Psoas muscle (tissue), 8 donors: ENCODE measurements at regions of chr17 and their contacts with region 1.

Region 1: GRCh38 chr17:27601069-27601975 is 29.7 kb upstream of the LGALS9 start:
- DNase-seq: peak; percentile 66 to 81
- ATAC-seq: peak; percentile 59 to 76 (median 60)
- H3K4me3 ChIP-seq: no peak overlapping the region
- H3K27ac ChIP-seq: peak overlapping the region; percentile 7
- H3K4me1 ChIP-seq: no peaks in the 10 kb centered on the region
- H3K27me3 ChIP-seq: no peaks in the 10 kb centered on the region
- CTCF ChIP-seq: peak; percentile 96

Region 2: DNA sequence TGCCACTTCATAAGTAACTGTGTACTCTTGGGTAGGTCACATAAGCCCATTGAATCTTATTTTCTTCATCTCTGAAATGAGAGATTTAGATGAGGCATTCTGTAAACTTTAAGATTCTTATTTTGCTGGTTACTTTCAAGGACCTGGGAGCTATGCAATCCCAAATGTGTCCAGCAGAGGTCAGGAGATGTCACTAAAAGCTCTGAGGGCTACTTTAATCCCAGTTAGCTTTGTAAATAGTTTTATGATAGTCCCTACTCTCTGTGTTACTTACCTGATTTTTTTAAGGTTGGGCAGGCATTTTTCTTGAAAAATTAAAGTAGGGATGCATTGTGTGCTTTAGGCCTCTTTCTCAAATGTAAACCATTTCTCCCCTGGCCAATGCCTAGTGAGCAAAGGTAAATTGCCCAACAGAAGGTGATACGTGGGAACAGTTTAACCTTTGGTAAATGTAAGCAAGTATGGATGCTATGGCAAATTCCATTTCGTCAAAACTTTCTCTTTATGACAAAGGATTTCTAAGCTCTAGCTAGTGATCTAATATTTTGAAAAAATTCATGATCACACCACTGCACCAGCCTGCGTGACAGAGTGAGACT is 364.5 kb before region 1 on chr17:
- intact Hi-C with region 1: loop called (anchors 2 kb)
- DNase-seq: peak; percentile 57 to 67
- ATAC-seq: peak; percentile 85 to 90 (median 88)
- H3K4me3 ChIP-seq: no peak overlapping the region
- H3K27ac ChIP-seq: no peak overlapping the region
- H3K4me1 ChIP-seq: no peaks in the 10 kb centered on the region
- H3K27me3 ChIP-seq: no peaks in the 10 kb centered on the region
- CTCF ChIP-seq: peak; percentile 99

Region 3: GRCh38 chr17:27449988-27450387 is 151.3 kb before region 1 on chr17:
- intact Hi-C with region 1: loop called in 1 of 2 experiments (anchors 2 kb)
- DNase-seq: no peak
- ATAC-seq: no peak
- H3K4me3 ChIP-seq: no peak overlapping the region
- H3K27ac ChIP-seq: no peak overlapping the region
- H3K4me1 ChIP-seq: no peaks in the 10 kb centered on the region
- H3K27me3 ChIP-seq: no peaks in the 10 kb centered on the region
- CTCF ChIP-seq: no peak

Region 4: DNA sequence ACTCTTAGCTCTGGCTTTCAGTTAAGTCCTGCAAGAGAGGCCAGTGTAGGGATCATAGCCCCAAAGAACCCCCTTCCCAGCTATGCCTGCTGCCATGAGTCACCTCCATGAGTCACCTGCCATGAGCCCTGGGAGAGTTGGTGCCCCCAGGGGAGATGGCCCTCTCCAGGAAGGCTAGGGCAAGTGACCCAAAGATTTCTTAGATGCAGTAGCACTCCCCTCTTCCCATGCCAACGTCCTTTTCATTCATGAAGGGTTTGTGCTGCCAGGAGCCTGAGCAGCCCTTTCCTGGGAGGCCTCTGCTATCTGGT is 48.9 kb before region 1 on chr17:
- intact Hi-C with region 1: no loop called
- DNase-seq: no peak
- ATAC-seq: peak in 3 of 4 donors; percentile 37 to 61 (median 45)
- H3K4me3 ChIP-seq: no peak overlapping the region
- H3K27ac ChIP-seq: no peak overlapping the region
- H3K4me1 ChIP-seq: peaks cover 24% of the 10 kb centered on the region
- H3K27me3 ChIP-seq: no peaks in the 10 kb centered on the region
- CTCF ChIP-seq: no peak

Region 5: GRCh38 chr17:27565874-27566670 is 35.2 kb before region 1 on chr17:
- intact Hi-C with region 1: loop called in 1 of 2 experiments (anchors 2 kb)
- DNase-seq: no peak
- ATAC-seq: peak; percentile 20 to 51 (median 27)
- H3K4me3 ChIP-seq: no peak overlapping the region
- H3K27ac ChIP-seq: peak overlapping the region; percentile 65
- H3K4me1 ChIP-seq: peaks cover 48% of the 10 kb centered on the region
- H3K27me3 ChIP-seq: no peaks in the 10 kb centered on the region
- CTCF ChIP-seq: no peak